OCI-LY7 (cell line): ENCODE measurements at regions of chr2 and their contacts with region 1.

Region 1: GRCh38 chr2:10408649-10409579 is 39.2 kb downstream of the ODC1 start:
- DNase-seq: peak; percentile 88
- H3K4me3 ChIP-seq: peak overlapping the region; percentile 50
- H3K27ac ChIP-seq: peak overlapping the region; percentile 90
- H3K4me1 ChIP-seq: peaks cover 63% of the 10 kb centered on the region
- CTCF ChIP-seq: peak; percentile 97

Region 2: DNA sequence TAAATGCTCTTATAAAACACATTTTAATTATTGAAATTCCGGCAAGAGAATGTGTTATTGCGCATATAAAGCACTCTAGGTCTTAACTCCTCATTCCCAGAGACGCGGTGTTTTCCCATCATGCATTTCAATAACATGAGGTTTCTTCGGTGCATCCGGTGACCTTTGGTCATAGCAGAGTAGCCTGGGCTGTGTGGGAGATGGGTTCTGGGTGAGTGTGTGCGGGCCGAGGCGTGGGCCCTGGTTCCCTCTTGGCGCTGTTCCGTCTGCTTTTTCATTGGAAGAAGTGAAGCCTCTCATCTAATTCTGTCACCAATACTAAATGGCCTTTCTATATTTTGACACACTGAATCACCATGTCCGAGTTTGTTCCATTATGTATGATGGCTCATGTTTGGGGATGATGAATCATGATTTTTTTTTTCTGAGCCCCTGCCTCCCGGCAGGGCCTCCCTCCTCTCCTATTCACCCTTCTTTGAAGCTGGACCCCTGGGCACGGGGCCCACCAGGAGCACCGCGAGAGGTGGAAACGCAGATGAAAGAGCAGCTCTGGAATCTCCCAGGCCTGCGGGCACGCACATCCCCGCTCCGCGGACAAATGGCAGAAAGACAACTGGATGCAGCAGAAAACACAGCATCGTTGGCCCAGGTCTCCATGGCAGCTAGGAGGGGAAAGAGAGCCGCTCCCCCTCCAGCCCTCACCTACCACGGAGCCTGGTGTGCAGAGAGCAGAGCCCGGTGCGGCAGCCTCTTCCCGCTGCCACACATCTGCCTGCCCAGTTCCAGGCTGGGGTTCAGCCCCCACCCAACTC is 192.0 kb before region 1 on chr2:
- CTCF ChIA-PET with region 1: no interaction called
- POLR2A ChIA-PET with region 1: no interaction called
- intact Hi-C with region 1: loop called (anchors 2 kb)
- DNase-seq: no peak
- H3K4me3 ChIP-seq: no peak overlapping the region
- H3K27ac ChIP-seq: no peak overlapping the region
- H3K4me1 ChIP-seq: no peaks in the 10 kb centered on the region
- CTCF ChIP-seq: no peak

Region 3: DNA sequence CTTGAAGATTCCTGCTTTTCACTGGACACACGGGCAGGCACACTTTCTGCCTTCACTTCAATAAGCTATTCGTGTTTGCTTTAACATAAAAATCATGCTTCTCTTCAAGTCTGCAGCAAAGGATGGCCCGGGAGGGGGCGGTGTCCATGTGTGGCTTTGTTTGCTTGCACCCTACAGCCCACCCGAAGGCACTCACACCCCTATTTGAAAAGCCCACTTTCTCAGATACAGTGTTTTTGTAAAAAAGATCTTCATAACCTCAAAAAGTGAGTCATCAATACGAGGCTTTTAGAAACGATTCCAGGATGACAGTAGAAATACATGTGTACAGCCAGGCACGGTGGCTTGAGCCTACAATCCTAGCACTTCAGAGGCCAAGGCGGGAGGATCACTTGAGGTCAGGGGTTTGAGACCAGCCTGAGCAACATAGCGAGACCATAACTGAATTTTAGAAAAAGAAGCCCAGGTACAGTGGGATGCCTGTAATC is 142.7 kb before region 1 on chr2:
- CTCF ChIA-PET with region 1: interaction called, 4 read pairs
- POLR2A ChIA-PET with region 1: interaction called, 3 read pairs
- intact Hi-C with region 1: loop called (anchors 1 kb)
- DNase-seq: no peak
- H3K4me3 ChIP-seq: no peak overlapping the region
- H3K27ac ChIP-seq: no peak overlapping the region
- H3K4me1 ChIP-seq: no peaks in the 10 kb centered on the region
- CTCF ChIP-seq: peak; percentile 52

Region 4: GRCh38 chr2:10324095-10324835 is 84.6 kb before region 1 on chr2:
- CTCF ChIA-PET with region 1: interaction called, 9 read pairs
- POLR2A ChIA-PET with region 1: interaction called, 22 read pairs
- intact Hi-C with region 1: loop called (anchors 1 kb)
- DNase-seq: no peak
- H3K4me3 ChIP-seq: no peak overlapping the region
- H3K27ac ChIP-seq: no peak overlapping the region
- H3K4me1 ChIP-seq: peaks cover 56% of the 10 kb centered on the region
- CTCF ChIP-seq: no peak

Region 5: GRCh38 chr2:10375570-10376281 is 33.2 kb before region 1 on chr2:
- CTCF ChIA-PET with region 1: interaction called, 20 read pairs
- POLR2A ChIA-PET with region 1: interaction called, 9 read pairs
- intact Hi-C with region 1: loop called (anchors 1 kb)
- DNase-seq: peak; percentile 76
- H3K4me3 ChIP-seq: peak overlapping the region; percentile 25
- H3K27ac ChIP-seq: peak overlapping the region; percentile 5
- H3K4me1 ChIP-seq: peaks cover 60% of the 10 kb centered on the region
- CTCF ChIP-seq: no peak

Region 6: GRCh38 chr2:10434886-10435819 is 26.2 kb after region 1 on chr2:
- CTCF ChIA-PET with region 1: interaction called, 14 read pairs
- POLR2A ChIA-PET with region 1: no interaction called
- intact Hi-C with region 1: loop called (anchors 1 kb)
- DNase-seq: peak; percentile 80
- H3K4me3 ChIP-seq: no peak overlapping the region
- H3K27ac ChIP-seq: no peak overlapping the region
- H3K4me1 ChIP-seq: peaks cover 5% of the 10 kb centered on the region
- CTCF ChIP-seq: peak; percentile 94

Region 7: GRCh38 chr2:10947005-10947440 is 538.1 kb after region 1 on chr2:
- CTCF ChIA-PET with region 1: no interaction called
- POLR2A ChIA-PET with region 1: no interaction called
- intact Hi-C with region 1: no loop called
- DNase-seq: no peak
- H3K4me3 ChIP-seq: no peak overlapping the region
- H3K27ac ChIP-seq: no peak overlapping the region
- H3K4me1 ChIP-seq: no peaks in the 10 kb centered on the region
- CTCF ChIP-seq: no peak